ENCODE measurements at regions of chr1 and their contacts with region 1.

Region 1: GRCh38 chr1:157691285-157691920 is 9.2 kb downstream of the FCRL3 start:
- DNase-seq: peak; percentile 45
- H3K4me3 Mint-ChIP-seq: no peak overlapping the region
- H3K27ac Mint-ChIP-seq: peak overlapping the region; percentile 8
- H3K4me1 Mint-ChIP-seq: peaks cover 53% of the 10 kb centered on the region
- H3K27me3 Mint-ChIP-seq: no peaks in the 10 kb centered on the region
- CTCF ChIP-seq: peak; percentile 54

Region 2: GRCh38 chr1:157505481-157506272 is 185.7 kb before region 1 on chr1:
- CTCF ChIA-PET with region 1: no interaction called
- intact Hi-C with region 1: loop called (anchors 1 kb)
- DNase-seq: peak; percentile 71
- H3K4me3 Mint-ChIP-seq: peak overlapping the region; percentile 62
- H3K27ac Mint-ChIP-seq: no peak overlapping the region
- H3K4me1 Mint-ChIP-seq: peaks cover 11% of the 10 kb centered on the region
- H3K27me3 Mint-ChIP-seq: peaks cover 17% of the 10 kb centered on the region
- CTCF ChIP-seq: peak; percentile 76

Region 3: GRCh38 chr1:157725221-157725577 is 33.8 kb after region 1 on chr1:
- CTCF ChIA-PET with region 1: no interaction called
- intact Hi-C with region 1: no loop called
- DNase-seq: no peak
- H3K4me3 Mint-ChIP-seq: no peak overlapping the region
- H3K27ac Mint-ChIP-seq: no peak overlapping the region
- H3K4me1 Mint-ChIP-seq: peaks cover under 1% of the 10 kb centered on the region
- H3K27me3 Mint-ChIP-seq: no peaks in the 10 kb centered on the region
- CTCF ChIP-seq: no peak

Region 4: DNA sequence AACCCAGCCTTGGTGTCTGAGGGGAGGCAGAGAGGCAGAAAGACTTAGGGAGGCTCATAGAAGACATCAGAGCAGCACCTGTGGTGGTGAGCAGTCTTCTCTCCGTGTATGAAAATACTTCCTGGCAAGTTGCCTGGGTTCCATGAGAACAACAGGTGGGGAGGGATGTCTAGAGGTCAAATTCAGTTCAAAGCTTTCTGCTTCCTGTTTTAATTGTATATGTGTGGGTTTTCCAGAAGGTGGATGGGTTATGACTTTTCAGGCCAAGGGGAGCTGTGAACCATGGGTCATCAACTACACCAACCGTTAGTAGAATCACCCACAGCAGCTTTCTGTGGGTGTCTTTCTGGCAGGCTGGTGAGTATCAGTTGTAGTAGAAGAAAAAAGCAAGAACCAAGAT is 89.6 kb after region 1 on chr1:
- CTCF ChIA-PET with region 1: no interaction called
- intact Hi-C with region 1: no loop called
- DNase-seq: peak; percentile 35
- H3K4me3 Mint-ChIP-seq: peak overlapping the region; percentile 2
- H3K27ac Mint-ChIP-seq: peak overlapping the region; percentile 61
- H3K4me1 Mint-ChIP-seq: peaks cover 49% of the 10 kb centered on the region
- H3K27me3 Mint-ChIP-seq: no peaks in the 10 kb centered on the region
- CTCF ChIP-seq: no peak

Region 5: DNA sequence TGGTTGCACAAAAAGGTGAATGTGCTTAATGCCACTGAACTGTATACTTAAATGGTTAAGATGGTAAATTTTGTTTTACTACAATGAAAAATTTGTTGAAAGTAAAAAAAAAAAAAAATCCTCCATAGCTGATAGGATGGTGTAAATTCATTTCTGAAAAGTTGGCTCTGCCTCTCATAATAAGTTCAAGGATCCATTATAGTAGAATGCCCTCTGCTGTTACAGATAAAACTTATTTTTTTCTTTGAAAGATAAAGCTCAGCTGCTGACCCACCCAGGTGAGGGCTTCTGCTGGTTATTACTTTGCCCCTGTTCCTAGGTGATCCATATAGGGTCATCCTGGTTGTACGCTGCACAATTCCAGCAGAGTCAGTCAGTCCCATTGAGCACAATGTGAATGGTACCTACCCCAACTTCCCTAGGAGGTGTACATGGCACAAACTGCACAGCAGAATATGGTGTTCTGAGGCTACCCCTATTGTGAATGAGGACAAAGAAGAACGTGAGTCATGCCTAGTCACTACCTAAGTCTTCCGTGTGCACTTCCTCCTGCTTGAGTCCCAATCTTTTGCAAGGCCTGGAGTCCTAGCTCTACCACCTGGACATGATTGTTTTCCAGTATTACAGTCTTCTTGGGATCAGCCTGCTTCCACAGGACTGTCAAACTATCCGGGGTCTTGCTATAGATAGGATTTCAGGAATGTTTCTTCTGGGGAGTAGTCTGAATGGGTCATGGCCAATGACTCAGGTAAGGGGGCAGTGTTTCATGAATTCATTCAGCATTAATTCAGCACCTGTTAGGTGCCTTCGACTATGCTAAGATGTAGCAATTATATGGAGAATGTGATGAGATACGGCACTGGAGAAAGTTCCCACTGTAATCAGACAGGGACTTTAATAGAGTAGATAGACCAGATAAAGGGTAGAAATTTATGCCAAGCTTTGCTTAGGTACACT is 171.0 kb after region 1 on chr1:
- CTCF ChIA-PET with region 1: interaction called, 4 read pairs
- intact Hi-C with region 1: loop called (anchors 5 kb)
- DNase-seq: no peak
- H3K4me3 Mint-ChIP-seq: no peak overlapping the region
- H3K27ac Mint-ChIP-seq: peak overlapping the region; percentile 50
- H3K4me1 Mint-ChIP-seq: peaks cover 10% of the 10 kb centered on the region
- H3K27me3 Mint-ChIP-seq: no peaks in the 10 kb centered on the region
- CTCF ChIP-seq: no peak

Measured in Calu3 (cell line).